Activated naive CD4-positive, alpha-beta T cell treated with anti-CD3 and anti-CD28 coated beads, Interleukin-2, amount 10 ng/mL, durations not matched to agents 7 days and 5 days (primary cell): ENCODE measurements at regions of chr14 and their contacts with region 1.

Region 1: DNA sequence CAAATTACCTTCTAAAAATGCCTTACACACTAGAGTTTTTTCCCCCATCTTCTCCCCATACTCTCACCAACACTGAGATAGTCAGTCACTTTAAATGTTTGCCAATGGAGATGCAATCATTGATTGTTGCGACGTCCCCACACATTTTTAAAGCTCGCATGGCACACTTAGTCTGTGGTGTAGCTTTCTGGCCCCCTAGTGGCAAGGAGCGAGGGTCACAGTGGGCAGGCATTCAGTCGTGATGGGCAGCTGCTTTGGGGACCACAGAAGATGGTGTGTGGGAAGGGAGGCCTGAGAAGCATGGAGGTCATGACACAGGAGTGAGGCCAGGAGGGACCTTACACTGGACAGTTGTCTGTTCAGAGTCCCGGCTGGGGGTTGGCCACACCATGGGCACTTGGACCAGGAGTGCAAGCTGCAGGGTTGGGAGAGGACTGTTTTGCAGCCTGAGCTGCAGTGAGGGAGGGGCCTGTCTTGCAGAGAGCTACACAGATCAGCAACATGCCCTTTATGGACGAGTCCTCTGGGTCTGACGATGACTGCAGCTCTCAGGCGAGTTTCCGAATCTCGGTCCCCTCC is 28.7 kb downstream of the PIGH start:
- DNase-seq: peak; percentile 81
- H3K4me3 Mint-ChIP-seq: no peak overlapping the region
- H3K27ac Mint-ChIP-seq: no peak overlapping the region
- H3K4me1 Mint-ChIP-seq: no peaks in the 10 kb centered on the region
- H3K27me3 Mint-ChIP-seq: peaks cover 16% of the 10 kb centered on the region

Region 2: GRCh38 chr14:67420102-67420830 is 151.1 kb before region 1 on chr14:
- CTCF ChIA-PET with region 1: interaction called, 206 read pairs
- DNase-seq: peak; percentile 62
- H3K4me3 Mint-ChIP-seq: no peak overlapping the region
- H3K27ac Mint-ChIP-seq: no peak overlapping the region
- H3K4me1 Mint-ChIP-seq: peaks cover 7% of the 10 kb centered on the region
- H3K27me3 Mint-ChIP-seq: peaks cover 37% of the 10 kb centered on the region

Region 3: DNA sequence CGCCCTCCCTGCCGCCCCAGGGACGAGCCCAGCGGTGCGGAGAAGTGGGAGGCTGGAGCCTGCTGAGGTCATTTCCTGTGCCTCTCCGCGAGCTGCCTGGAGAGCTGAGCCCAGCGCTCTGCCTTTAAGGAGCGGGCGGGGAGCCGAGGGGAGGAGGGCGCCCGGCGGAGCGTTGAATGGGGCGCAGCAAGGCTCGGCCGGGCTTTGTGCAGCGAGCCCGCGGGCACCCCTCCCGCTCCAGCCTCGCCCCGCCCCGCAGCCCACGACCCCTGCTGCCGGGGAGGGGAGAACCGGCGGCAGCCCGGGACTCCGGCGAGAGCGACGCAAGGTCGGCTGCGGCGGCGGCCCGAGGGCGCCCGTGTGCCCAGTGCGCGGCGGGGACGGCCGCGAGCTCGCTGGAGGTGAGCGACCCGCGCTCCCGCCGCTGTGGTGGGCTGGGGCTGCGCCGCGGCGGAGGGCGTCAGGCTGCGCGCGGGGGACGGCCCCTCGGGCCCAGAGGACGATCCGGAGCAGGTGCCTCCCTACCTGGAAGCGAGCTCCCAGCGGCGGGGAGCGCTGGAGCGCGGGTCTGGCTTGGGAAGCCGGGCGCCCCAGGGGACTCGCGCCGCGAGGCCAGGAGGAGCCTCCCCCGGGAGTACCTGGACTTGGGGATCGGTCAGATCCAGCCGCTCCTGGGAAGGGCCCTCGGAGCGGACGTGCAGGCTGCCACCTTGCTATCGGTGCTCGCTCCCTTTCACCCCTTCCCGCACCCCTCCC is 38.2 kb before region 1 on chr14 and contains the start of gene PLEKHH1:
- CTCF ChIA-PET with region 1: interaction called, 79 read pairs
- DNase-seq: peak; percentile 77
- H3K4me3 Mint-ChIP-seq: peak within 1 kb of the TSS; percentile 66
- H3K27ac Mint-ChIP-seq: no peak within 1 kb of the TSS
- H3K4me1 Mint-ChIP-seq: no peaks in the 10 kb centered on the region
- H3K27me3 Mint-ChIP-seq: peaks cover 72% of the 10 kb centered on the region

Region 4: GRCh38 chr14:67544590-67544989 is 26.8 kb before region 1 on chr14:
- CTCF ChIA-PET with region 1: no interaction called
- DNase-seq: no peak
- H3K4me3 Mint-ChIP-seq: no peak overlapping the region
- H3K27ac Mint-ChIP-seq: no peak overlapping the region
- H3K4me1 Mint-ChIP-seq: peaks cover 11% of the 10 kb centered on the region
- H3K27me3 Mint-ChIP-seq: peaks cover 57% of the 10 kb centered on the region

Region 5: DNA sequence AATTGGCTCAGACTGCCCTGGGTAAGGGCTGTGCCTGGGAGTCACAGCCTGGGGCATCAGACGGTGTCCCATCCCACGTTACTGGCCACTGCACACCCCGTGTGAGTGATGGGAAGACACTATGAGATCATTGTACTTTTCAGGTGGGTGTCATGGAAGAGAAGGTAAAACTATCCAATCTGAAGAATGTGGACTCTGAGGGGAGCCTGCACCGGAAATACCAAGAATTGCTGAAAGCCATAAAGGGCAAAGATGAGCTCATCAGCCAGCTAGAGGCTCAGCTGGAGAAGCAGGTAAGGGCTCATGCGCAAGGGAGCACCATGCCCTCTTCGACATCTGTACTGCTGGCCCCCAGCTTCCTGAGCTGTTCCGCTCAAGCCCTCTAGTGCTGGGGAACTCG is 14.2 kb before region 1 on chr14:
- CTCF ChIA-PET with region 1: interaction called, 16 read pairs
- DNase-seq: no peak
- H3K4me3 Mint-ChIP-seq: no peak overlapping the region
- H3K27ac Mint-ChIP-seq: no peak overlapping the region
- H3K4me1 Mint-ChIP-seq: no peaks in the 10 kb centered on the region
- H3K27me3 Mint-ChIP-seq: peaks cover 32% of the 10 kb centered on the region

Region 6: GRCh38 chr14:67583711-67584644 is 12.6 kb after region 1 on chr14:
- CTCF ChIA-PET with region 1: interaction called, 34 read pairs
- DNase-seq: peak; percentile 55
- H3K4me3 Mint-ChIP-seq: no peak overlapping the region
- H3K27ac Mint-ChIP-seq: no peak overlapping the region
- H3K4me1 Mint-ChIP-seq: peaks cover 12% of the 10 kb centered on the region
- H3K27me3 Mint-ChIP-seq: no peaks in the 10 kb centered on the region

Region 7: DNA sequence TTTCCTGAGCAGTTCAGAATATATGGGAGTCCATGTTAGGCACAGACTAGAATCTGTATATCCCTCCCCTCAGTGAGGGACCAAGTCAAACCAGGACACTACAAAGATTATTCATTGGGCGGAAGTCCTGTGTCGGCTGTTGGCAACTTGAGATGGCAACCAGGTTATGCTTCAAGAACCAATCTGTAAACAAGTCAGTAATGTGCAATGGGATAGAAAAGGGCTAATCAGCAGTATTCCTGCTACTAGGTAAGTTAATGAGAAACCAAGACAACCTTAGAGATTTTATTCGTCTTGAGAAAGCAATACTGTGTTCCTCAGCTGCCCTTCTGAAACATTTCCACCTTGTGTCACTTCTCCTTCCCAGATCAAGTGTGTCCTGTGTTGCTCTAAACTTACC is 74.8 kb after region 1 on chr14:
- CTCF ChIA-PET with region 1: no interaction called
- DNase-seq: no peak
- H3K4me3 Mint-ChIP-seq: no peak overlapping the region
- H3K27ac Mint-ChIP-seq: no peak overlapping the region
- H3K4me1 Mint-ChIP-seq: peaks cover 4% of the 10 kb centered on the region
- H3K27me3 Mint-ChIP-seq: no peaks in the 10 kb centered on the region